Common myeloid progenitor, CD34-positive (primary cell): ENCODE measurements at regions of chr7 and their contacts with region 1.

Region 1: GRCh38 chr7:42893346-42894242 is 18.3 kb downstream of the C7orf25 start:
- DNase-seq: no peak
- H3K4me3 ChIP-seq: no peak overlapping the region
- H3K27ac ChIP-seq: no peak overlapping the region
- H3K4me1 ChIP-seq: peaks cover 4 to 17% (median 11%) of the 10 kb centered on the region in 4 experiments
- H3K27me3 ChIP-seq: no peaks in the 10 kb centered on the region

Region 2: GRCh38 chr7:42876182-42877068 is 17.2 kb before region 1 on chr7:
- CTCF ChIA-PET with region 1: interaction called, 10 read pairs
- POLR2A ChIA-PET with region 1: no interaction called
- DNase-seq: peak; percentile 58 to 72 (median 67)
- H3K4me3 ChIP-seq: no peak overlapping the region
- H3K27ac ChIP-seq: no peak overlapping the region
- H3K4me1 ChIP-seq: peaks cover 2 to 11% (median 9%) of the 10 kb centered on the region in 4 experiments
- H3K27me3 ChIP-seq: no peaks in the 10 kb centered on the region